ENCODE measurements at regions of chr2 and their contacts with region 1.

Region 1: DNA sequence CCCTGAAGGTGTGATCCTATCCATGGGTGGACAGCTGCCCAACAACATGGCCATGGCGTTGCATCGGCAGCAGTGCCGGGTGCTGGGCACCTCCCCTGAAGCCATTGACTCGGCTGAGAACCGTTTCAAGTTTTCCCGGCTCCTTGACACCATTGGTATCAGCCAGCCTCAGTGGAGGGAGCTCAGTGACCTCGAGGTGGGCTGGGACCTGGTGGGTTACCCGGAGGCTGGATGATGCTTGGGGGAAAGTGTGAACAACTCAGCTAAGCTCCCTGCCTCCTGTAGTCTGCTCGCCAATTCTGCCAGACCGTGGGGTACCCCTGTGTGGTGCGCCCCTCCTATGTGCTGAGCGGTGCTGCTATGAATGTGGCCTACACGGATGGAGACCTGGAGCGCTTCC is 16.2 kb downstream of the CAD start:
- DNase-seq: no peak
- H3K4me3 Mint-ChIP-seq: no peak overlapping the region
- H3K27ac Mint-ChIP-seq: no peak overlapping the region
- H3K4me1 Mint-ChIP-seq: no peaks in the 10 kb centered on the region
- H3K27me3 Mint-ChIP-seq: no peaks in the 10 kb centered on the region

Region 2: GRCh38 chr2:27249891-27250651 is 16.7 kb after region 1 on chr2:
- CTCF ChIA-PET with region 1: interaction called, 12 read pairs
- POLR2A ChIA-PET with region 1: no interaction called
- DNase-seq: peak; percentile 45
- H3K4me3 Mint-ChIP-seq: no peak overlapping the region
- H3K27ac Mint-ChIP-seq: no peak overlapping the region
- H3K4me1 Mint-ChIP-seq: no peaks in the 10 kb centered on the region
- H3K27me3 Mint-ChIP-seq: peaks cover 16% of the 10 kb centered on the region

Region 3: DNA sequence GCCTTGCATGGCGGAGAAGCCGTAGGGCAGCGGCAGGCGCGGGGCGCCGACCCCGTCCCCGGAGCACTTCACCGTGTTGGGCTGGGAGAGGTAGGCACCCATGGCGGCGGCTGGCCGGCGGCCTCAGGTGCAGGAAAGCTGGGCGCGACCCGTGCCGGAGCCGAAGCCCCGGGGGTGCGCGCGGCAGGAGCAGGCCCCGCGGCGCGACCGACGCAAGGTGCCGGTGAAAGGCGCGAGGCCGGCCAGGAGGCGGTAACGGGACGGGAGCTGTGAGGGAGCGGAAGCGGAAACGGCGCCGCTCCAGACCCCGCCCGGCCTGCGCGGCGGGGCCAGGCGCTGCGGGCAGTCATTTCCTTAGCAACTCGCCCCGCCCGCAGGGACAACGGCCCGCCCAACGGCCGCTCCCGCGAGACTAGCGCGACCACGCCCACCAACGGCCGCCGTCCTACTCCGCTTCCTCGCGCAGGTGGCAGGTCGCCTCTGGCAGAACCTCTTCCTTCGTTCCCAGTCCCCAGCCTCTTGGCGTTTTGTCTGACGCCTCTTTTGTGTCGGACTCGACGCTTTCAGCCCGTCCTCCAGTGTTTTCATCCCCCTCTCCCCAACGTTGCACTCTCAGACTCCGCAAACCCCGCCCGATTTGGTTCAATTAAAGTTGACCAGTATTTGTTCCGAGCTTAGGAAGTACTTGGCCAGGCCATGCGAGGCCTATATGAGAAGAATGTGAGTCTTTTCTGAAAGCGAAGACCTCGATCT is 176.2 kb after region 1 on chr2 and contains the start of gene PPM1G:
- CTCF ChIA-PET with region 1: no interaction called
- POLR2A ChIA-PET with region 1: interaction called, 12 read pairs
- DNase-seq: peak; percentile 96
- H3K4me3 Mint-ChIP-seq: peak within 1 kb of the TSS; percentile 82
- H3K27ac Mint-ChIP-seq: peak within 1 kb of the TSS; percentile 92
- H3K4me1 Mint-ChIP-seq: peaks cover 36% of the 10 kb centered on the region
- H3K27me3 Mint-ChIP-seq: peaks cover 6% of the 10 kb centered on the region
- total RNA-seq, gene PPM1G: 109 TPM